H1 (cell line): ENCODE measurements at regions of chr17 and their contacts with region 1.

Region 1: DNA sequence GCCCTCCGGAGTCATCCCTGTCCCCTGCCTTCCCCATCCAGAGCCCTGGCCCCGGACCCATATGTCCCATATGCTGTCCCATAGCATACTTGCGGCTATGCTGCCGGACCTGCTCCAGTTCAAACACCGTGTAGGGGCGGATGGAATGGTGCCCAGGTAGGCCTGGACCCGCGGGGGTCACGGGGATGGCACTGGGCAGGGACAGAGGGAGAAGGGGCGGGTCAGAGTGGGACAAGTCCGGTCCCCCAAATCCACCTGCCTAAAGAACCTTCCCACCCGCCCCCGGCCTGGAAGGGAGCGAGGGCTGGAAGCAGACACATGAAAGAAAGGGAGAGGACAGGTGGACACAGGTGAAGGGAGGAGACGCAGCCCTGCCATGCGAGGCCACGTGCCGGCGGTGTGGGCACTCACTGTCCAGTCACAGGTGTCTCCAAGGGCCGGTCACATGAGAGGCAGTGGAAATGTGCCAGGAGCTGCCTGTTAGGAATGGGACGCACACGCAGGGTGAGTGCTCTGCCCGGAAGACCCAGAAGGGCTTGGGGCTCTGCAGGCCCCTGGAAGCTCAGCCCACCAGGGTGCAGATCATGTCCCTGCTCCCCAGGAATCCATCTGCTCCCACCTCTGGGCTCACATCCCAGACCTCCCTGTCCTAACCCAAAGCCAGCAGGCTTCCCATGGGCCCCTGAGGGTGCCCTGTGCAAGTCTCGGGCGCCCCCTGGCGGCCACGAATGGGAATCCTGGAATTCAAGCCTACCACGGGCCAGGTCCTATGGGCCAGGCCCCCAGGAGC is 14.0 kb downstream of the UBALD2 start:
- DNase-seq: peak; percentile 73 to 98
- H3K4me3 ChIP-seq: no peak overlapping the region
- H3K27ac ChIP-seq: no peak overlapping the region
- H3K4me1 ChIP-seq: peaks cover 0 to 4% (median under 1%) of the 10 kb centered on the region in 4 experiments; a peak in 3 of 7 replicates
- H3K27me3 ChIP-seq: no peaks in the 10 kb centered on the region
- CTCF ChIP-seq: peak; percentile 84 to 97 (median 94)
- EP300 ChIP-seq: no peak
- POLR2A ChIP-seq: no peak
- RAD21 ChIP-seq: peak; percentile 95 to 99

Region 2: DNA sequence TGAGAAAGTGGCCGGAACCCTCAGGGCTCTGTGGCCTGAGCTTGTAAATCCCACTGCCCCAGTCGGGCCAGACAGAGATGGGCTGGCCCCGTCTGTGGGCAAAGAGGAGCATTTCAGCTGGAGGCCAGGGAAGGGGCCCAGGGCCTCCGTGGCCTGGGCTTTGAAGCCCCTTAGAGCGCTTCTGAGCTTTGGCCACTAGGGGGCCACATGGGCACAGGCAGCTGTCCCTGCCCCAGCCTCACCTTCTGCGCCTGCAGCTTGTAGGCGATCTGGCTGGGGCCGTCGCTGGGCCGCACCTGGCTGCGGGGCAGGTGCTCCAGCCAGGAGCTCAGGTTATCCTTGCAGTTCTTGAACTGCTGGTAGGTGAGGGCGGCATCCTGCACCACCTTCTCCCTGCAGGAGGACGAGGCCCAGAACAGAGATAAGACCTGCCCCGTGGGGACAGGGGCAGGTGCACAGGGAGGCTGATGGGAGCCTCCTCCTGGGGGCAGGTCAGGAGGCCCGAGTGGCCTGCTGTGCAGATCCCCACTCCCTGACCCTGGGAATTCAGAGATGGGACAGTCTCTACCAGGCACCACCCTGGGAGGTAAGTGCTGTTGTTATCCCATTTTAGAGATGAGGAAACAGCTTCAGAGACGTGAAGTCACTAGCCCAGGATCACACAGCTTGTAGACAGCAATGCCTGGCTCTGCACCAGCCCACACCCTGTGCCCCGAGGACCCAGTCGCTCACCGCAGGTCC is 264.8 kb before region 1 on chr17:
- CTCF ChIA-PET with region 1: interaction called, 11 read pairs
- POLR2A ChIA-PET with region 1: no interaction called
- DNase-seq: peak; percentile 83 to 89
- H3K4me3 ChIP-seq: no peak overlapping the region
- H3K27ac ChIP-seq: no peak overlapping the region
- H3K4me1 ChIP-seq: peaks cover 0 to 2% (median under 1%) of the 10 kb centered on the region in 4 experiments; a peak in 3 of 7 replicates
- H3K27me3 ChIP-seq: no peaks in the 10 kb centered on the region; a peak in 1 of 7 replicates
- CTCF ChIP-seq: peak; percentile 88 to 99 (median 96)
- EP300 ChIP-seq: peak in 1 of 2 experiments; percentile 65; a peak in 1 of 3 replicates
- POLR2A ChIP-seq: no peak
- RAD21 ChIP-seq: peak; percentile 93 to 97

Region 3: DNA sequence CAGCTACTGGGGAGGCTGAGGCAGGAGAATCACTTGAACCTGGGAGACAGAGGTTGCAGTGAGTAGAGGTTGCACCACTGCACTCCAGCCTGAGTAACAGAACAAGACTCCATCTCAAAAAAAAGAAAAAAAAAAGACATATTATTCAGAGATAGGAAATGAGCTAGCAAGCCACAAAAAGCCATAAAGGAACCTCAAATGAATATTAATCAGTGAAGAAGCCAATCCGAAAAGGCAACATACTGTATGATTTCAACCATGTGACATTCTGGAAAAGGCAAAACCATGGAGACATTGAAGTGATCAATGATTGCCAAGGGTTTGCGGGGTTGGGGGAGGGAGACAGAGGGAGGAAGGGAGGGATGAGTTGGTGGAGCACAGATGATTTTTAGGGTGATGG is 167.2 kb before region 1 on chr17:
- CTCF ChIA-PET with region 1: interaction called, 10 read pairs
- POLR2A ChIA-PET with region 1: no interaction called
- DNase-seq: no peak
- H3K4me3 ChIP-seq: no peak overlapping the region
- H3K27ac ChIP-seq: no peak overlapping the region
- H3K4me1 ChIP-seq: no peaks in the 10 kb centered on the region
- H3K27me3 ChIP-seq: no peaks in the 10 kb centered on the region
- CTCF ChIP-seq: no peak
- EP300 ChIP-seq: no peak
- POLR2A ChIP-seq: no peak
- RAD21 ChIP-seq: no peak

Region 4: GRCh38 chr17:76141212-76142038 is 137.7 kb before region 1 on chr17 and contains the start of gene FOXJ1:
- CTCF ChIA-PET with region 1: interaction called, 17 read pairs
- POLR2A ChIA-PET with region 1: no interaction called
- DNase-seq: peak; percentile 88 to 100
- H3K4me3 ChIP-seq: peak within 1 kb of the TSS; percentile 53 to 71 (median 58)
- H3K27ac ChIP-seq: no peak within 1 kb of the TSS
- H3K4me1 ChIP-seq: peaks cover 17 to 59% (median 54%) of the 10 kb centered on the region in 4 experiments
- H3K27me3 ChIP-seq: peaks cover 31 to 67% (median 60%) of the 10 kb centered on the region in 4 experiments
- CTCF ChIP-seq: no peak
- EP300 ChIP-seq: no peak
- POLR2A ChIP-seq: no peak
- RAD21 ChIP-seq: no peak
- total RNA-seq, gene FOXJ1: 4.9 and 5.4 TPM in 2 replicates

Region 5: DNA sequence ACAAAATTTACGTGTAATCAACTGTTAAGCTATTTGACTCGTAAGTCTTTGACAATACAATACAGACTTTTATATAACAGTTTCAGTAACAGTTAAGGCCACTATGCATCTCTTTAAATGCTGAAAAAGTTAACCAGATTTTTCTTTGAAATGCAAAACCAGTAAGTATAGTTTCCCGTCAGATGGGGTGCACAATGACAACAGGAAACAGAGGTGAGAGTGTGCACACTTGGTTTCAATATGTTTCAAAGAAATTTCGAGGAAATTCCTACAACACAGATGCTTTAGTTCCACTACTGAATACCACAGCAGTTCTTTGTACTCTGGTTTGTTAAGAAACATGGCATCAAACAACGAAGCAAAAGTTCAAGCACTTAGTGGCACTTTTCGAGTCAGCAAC is 87.3 kb before region 1 on chr17:
- CTCF ChIA-PET with region 1: interaction called, 17 read pairs
- POLR2A ChIA-PET with region 1: no interaction called
- DNase-seq: no peak
- H3K4me3 ChIP-seq: no peak overlapping the region
- H3K27ac ChIP-seq: no peak overlapping the region
- H3K4me1 ChIP-seq: peaks cover 0 to 4% (median 0%) of the 10 kb centered on the region in 4 experiments; a peak in 4 of 7 replicates
- H3K27me3 ChIP-seq: 0 out of 7 replicates have a peak, but pooled peaks cover 0 to 2% (median 0%) of the 10 kb centered on the region in 4 experiments
- CTCF ChIP-seq: no peak
- EP300 ChIP-seq: no peak
- POLR2A ChIP-seq: no peak
- RAD21 ChIP-seq: no peak

Region 6: GRCh38 chr17:76246080-76247066 is 32.8 kb before region 1 on chr17:
- CTCF ChIA-PET with region 1: interaction called, 18 read pairs
- POLR2A ChIA-PET with region 1: interaction called, 7 read pairs
- DNase-seq: no peak
- H3K4me3 ChIP-seq: no peak overlapping the region
- H3K27ac ChIP-seq: no peak overlapping the region
- H3K4me1 ChIP-seq: peaks cover 0 to 4% (median 1%) of the 10 kb centered on the region in 4 experiments; a peak in 3 of 7 replicates
- H3K27me3 ChIP-seq: peaks cover 0 to 13% (median 12%) of the 10 kb centered on the region in 4 experiments; a peak in 6 of 7 replicates
- CTCF ChIP-seq: no peak
- EP300 ChIP-seq: no peak
- POLR2A ChIP-seq: no peak
- RAD21 ChIP-seq: no peak

Region 7: GRCh38 chr17:76296186-76296585 is 17.0 kb after region 1 on chr17:
- CTCF ChIA-PET with region 1: interaction called, 76 read pairs
- POLR2A ChIA-PET with region 1: no interaction called
- DNase-seq: no peak
- H3K4me3 ChIP-seq: no peak overlapping the region
- H3K27ac ChIP-seq: no peak overlapping the region
- H3K4me1 ChIP-seq: no peaks in the 10 kb centered on the region
- H3K27me3 ChIP-seq: no peaks in the 10 kb centered on the region
- CTCF ChIP-seq: no peak
- EP300 ChIP-seq: no peak
- POLR2A ChIP-seq: no peak
- RAD21 ChIP-seq: no peak